Left ventricle myocardium inferior (tissue), 1 donor: ENCODE measurements at regions of chr2 and their contacts with region 1.

Region 1: DNA sequence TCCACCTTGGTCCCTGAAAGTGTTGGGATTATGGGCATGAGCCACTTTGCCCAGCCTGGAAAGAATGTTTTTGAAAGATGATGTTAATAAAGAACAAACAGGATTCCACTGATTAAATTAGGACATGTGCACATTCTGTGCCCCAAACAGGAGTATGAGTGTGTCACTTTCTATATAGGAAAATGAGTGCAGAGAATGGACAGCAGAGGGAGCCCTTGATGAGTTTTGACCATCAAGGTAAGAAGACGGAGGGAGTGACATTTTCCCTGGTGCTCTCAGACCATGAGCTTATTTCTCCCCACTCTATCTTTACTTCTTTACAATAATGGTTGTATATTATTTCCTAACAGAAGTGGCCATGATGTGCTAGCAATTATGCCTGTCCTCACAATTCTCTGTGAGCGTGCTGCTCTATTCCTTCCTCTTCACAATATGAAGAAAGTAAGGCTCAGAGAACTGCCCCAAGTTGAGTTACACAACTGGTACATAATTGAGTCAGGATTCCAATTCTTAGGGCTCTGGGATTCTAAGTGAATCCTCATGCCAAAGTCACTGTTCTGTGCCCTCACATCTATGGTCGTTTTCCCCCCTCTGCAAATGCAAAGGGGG is 20.6 kb downstream of the RPL37A start:
- DNase-seq: no peak
- H3K4me3 ChIP-seq: no peak overlapping the region
- H3K27ac ChIP-seq: no peak overlapping the region
- H3K4me1 ChIP-seq: peaks cover 11% of the 10 kb centered on the region
- H3K27me3 ChIP-seq: no peaks in the 10 kb centered on the region
- CTCF ChIP-seq: peak; percentile 85

Region 2: DNA sequence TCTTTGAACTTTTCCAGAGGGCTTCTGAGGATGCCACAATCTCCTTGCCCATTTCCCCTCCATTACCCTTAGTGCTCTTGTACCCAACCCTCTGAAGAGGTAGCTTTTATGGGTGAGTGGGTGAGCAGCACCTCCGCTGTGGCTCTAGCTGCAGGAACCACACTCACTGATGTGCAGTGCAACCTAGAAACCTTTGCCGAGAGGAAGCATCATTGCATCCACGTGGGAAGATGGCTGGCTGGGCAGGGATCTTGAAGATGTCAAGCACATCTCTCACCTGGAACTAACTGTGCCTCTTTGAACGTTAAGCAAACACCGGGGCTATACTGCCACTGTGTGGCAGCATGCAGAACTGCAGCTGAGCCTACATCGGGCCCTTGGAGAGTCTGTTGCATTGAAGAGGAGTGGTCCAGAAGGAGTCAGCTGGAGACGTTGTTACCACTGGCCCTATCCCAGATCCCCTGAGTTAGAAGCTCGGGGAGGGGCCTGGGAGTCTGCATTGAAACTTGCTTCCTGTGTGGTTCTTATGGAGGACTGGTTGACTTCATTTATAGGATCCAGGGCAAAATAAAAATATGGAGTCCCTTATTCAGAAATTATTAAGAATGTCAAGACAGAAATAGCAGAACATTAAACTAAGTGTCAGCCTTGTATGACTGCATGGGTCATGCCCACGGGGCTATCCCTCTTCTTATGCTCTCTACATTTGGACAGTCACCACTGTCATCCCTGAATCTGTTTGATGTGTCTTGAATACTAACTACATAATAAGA is 147.4 kb after region 1 on chr2:
- intact Hi-C with region 1: loop called (anchors 2 kb)
- DNase-seq: no peak
- H3K4me3 ChIP-seq: no peak overlapping the region
- H3K27ac ChIP-seq: no peak overlapping the region
- H3K4me1 ChIP-seq: peaks cover 23% of the 10 kb centered on the region
- H3K27me3 ChIP-seq: no peaks in the 10 kb centered on the region
- CTCF ChIP-seq: peak; percentile 99